HCT116 (cell line): ENCODE measurements at regions of chr1 and their contacts with region 1.

Region 1: GRCh38 chr1:36609241-36610027 is 126.7 kb upstream of the CSF3R start:
- DNase-seq: peak; percentile 68
- ATAC-seq: peak; percentile 97
- H3K4me3 ChIP-seq: no peak overlapping the region
- H3K27ac ChIP-seq: no peak overlapping the region
- H3K4me1 ChIP-seq: no peaks in the 10 kb centered on the region
- H3K27me3 ChIP-seq: peaks cover 25% of the 10 kb centered on the region; the same call in 1 of the 2 replicates
- CTCF ChIP-seq: peak; percentile 70 to 99 (median 96)
- POLR2A ChIP-seq: no peak
- RAD21 ChIP-seq: peak; percentile 86

Region 2: DNA sequence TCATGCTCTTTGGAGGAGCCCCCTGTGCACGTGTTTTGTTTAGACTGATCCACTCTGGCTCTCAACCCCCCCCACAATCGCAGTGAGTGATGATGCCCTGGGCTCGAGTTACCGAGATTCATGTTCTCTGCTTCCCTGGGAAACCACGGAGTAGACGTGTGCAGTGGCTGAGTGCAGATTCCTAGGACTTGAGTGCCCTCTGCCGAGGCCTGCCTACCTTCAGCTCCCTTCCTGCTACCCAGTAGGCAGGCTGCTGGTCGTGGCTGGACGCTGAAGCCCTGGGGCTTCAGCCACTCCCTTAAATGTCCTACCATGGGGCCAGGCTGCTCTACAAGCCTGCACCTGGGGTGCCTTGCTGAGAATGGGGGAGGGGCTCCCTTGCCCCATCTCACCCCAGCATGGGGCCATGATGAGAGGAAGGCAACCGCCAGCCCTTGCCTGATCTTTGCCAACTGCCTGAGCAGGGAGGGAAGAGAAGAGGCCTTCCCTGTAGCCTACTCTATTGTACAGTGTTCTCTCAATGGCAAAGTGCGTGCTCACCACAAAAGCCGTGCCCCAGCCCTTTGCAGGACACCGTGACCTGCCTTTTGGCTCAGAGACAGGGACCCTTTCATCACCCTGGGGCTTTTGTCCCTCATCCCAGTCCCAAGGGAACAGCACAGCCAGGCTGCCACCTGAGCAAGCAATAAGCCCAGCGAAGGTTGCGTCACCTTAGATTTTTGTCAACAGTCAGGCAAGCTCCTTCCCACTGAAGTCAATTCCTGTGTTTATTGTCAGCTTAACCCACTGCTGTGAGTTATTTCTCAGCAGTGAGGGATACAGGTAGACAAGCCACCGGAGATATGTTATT is 429.0 kb after region 1 on chr1:
- CTCF ChIA-PET with region 1: interaction called, 5 read pairs
- POLR2A ChIA-PET with region 1: no interaction called
- RAD21 ChIA-PET with region 1: no interaction called
- intact Hi-C with region 1: loop called (anchors 5 kb)
- DNase-seq: peak; percentile 7
- ATAC-seq: peak; percentile 70
- H3K4me3 ChIP-seq: no peak overlapping the region
- H3K27ac ChIP-seq: no peak overlapping the region
- H3K4me1 ChIP-seq: no peaks in the 10 kb centered on the region
- H3K27me3 ChIP-seq: peaks cover 38% of the 10 kb centered on the region
- CTCF ChIP-seq: peak; percentile 30 to 31 (median 30); a peak in 3 of 6 replicates
- POLR2A ChIP-seq: no peak
- RAD21 ChIP-seq: peak; percentile 56